Uterus (tissue), 4 donors: ENCODE measurements at regions of chrX and their contacts with region 1.

Region 1: GRCh38 chrX:13688958-13689740 is at the start of gene RAB9A:
- DNase-seq: peak; percentile 87 to 94
- H3K4me3 ChIP-seq: peak within 1 kb of the TSS; percentile 46 to 89
- H3K27ac ChIP-seq: peak within 1 kb of the TSS; percentile 89 to 96
- H3K4me1 ChIP-seq: no peaks in the 10 kb centered on the region
- H3K27me3 ChIP-seq: no peaks in the 10 kb centered on the region
- CTCF ChIP-seq: no peak
- POLR2A ChIP-seq: peak; percentile 81 to 93
- total RNA-seq, gene RAB9A: 27.2 to 40.2 (median 28.2) TPM

Region 2: DNA sequence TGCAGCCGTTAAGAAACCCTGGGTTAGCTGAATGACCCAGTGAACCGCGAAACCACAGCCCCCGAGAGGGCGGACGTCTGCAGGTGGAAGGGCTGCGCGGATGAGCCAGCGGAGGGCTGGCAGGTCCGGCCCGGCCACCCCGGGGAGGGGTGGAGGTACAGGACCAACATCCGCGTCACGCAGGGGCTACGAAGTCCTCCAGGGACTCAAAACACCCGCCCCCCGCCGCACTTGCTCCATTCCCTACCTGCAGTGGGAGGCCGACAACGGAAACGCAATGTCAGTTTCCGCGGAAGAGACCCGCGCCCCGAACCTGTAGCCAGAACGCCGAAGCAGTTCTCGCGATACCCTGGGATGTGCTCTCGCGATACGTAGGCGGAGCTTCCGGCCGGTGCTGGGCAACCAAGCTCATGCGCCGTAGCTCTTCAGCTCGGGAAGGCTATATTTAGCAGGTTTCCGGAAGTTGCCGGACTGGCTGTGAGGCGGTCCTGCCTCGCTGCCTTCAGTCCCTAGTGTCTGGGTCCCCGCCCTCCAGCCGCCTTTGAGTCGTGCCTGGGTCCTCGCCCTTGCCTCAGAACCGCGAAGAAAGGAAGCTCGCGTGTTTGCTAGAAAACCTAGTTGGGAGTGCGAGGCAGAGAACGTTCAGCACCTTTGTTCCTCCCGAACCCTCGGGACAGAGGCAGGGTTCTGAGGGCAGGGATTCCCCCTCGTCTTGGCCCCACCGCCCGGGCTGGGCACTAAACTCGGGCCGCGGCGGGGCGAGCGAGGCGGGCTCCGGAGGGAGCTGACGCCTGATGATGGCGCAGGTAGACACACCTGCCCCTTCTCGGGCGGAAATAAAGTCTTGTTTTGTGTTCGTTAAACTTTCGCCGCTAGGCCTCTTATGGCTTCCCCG is 45.4 kb after region 1 on chrX and contains the starts of genes OFD1 and TRAPPC2:
- intact Hi-C with region 1: loop called (anchors 10 kb)
- DNase-seq: peak; percentile 94 to 95
- H3K4me3 ChIP-seq: peak within 1 kb of the TSS; percentile 60 to 61
- H3K27ac ChIP-seq: peak within 1 kb of the TSS; percentile 83 to 87
- H3K4me1 ChIP-seq: no peaks in the 10 kb centered on the region
- H3K27me3 ChIP-seq: no peaks in the 10 kb centered on the region
- CTCF ChIP-seq: peak in 1 of 4 experiments; percentile 3
- POLR2A ChIP-seq: peak; percentile 94
- total RNA-seq, gene OFD1: 24.1 to 172 (median 49.7) TPM
- total RNA-seq, gene TRAPPC2: 5.6 to 48.0 (median 22.8) TPM

Region 3: DNA sequence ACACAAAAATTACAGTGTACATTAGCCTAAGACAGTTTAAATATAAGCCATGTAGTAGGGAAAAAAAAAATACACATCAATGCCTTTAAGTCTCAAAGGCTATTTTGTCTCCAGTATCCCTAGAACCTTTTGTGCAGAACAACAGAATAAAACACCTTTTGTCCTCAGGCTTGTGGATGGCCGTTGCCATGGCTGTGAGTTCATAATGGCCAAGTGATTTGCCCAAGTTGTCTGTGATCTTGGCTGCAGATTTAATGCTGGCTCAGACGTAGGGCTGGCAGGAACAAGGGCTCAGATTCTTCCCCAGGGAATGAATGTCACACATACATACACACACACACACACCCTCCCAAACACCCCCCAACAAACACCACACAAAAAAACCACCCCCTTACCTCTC is 102.4 kb after region 1 on chrX:
- intact Hi-C with region 1: no loop called
- DNase-seq: no peak
- H3K4me3 ChIP-seq: no peak overlapping the region
- H3K27ac ChIP-seq: no peak overlapping the region
- H3K4me1 ChIP-seq: no peaks in the 10 kb centered on the region
- H3K27me3 ChIP-seq: no peaks in the 10 kb centered on the region
- CTCF ChIP-seq: no peak
- POLR2A ChIP-seq: no peak

Region 4: DNA sequence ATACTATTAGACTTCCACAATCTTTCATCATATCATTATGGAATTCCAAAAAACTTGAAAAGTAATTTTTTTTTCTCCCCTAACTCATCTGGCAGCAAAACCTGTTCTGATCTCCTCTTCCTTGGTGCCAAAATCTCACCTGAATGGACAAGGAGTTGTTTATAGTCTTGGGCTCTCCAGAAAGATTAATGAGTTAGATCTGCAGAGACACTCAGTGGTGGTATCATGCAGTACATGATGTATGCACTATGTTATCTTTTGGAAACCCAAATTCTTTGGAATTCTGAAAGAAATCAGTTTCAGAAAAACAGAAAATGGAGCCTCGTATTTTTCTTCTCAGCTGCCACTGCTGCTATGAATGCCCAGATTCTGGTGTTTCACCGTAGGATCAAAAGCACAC is 116.1 kb after region 1 on chrX:
- intact Hi-C with region 1: no loop called
- DNase-seq: no peak
- H3K4me3 ChIP-seq: no peak overlapping the region
- H3K27ac ChIP-seq: no peak overlapping the region
- H3K4me1 ChIP-seq: no peaks in the 10 kb centered on the region
- H3K27me3 ChIP-seq: no peaks in the 10 kb centered on the region
- CTCF ChIP-seq: no peak
- POLR2A ChIP-seq: no peak

Region 5: DNA sequence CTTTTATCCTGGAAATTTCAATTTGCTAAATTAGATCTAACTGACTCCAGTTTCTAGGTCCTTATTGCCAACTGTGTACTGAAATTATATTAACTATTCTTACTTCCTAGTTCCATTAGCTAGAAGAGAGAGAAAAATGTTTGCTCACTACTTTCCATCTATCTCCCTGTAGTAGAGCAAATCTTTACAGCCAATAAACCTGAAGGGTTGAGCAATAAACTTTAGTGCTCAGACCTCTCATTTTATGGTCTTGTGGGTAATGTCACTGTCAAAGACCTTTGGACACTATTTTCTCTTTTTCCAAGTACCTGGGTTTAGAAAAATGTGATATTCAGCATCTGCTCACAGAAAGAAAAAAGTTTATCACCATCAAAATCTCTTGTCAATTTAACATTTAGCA is 578.1 kb after region 1 on chrX:
- intact Hi-C with region 1: no loop called
- DNase-seq: no peak
- H3K4me3 ChIP-seq: no peak overlapping the region
- H3K27ac ChIP-seq: no peak overlapping the region
- H3K4me1 ChIP-seq: no peaks in the 10 kb centered on the region
- H3K27me3 ChIP-seq: no peaks in the 10 kb centered on the region
- CTCF ChIP-seq: no peak
- POLR2A ChIP-seq: no peak